Activated CD4-positive, alpha-beta memory T cell treated with anti-CD3 and anti-CD28 coated beads, Interleukin-2, amount 10 ng/mL, durations not matched to agents 7 days and 5 days (primary cell): ENCODE measurements at regions of chr2 and their contacts with region 1.

Region 1: GRCh38 chr2:203871371-203871983 is 3.9 kb downstream of the CTLA4 start:
- DNase-seq: peak; percentile 66
- H3K4me3 Mint-ChIP-seq: peak overlapping the region; percentile 96
- H3K27ac Mint-ChIP-seq: peak overlapping the region; percentile 99
- H3K4me1 Mint-ChIP-seq: peaks cover 78% of the 10 kb centered on the region
- H3K27me3 Mint-ChIP-seq: no peaks in the 10 kb centered on the region

Region 2: DNA sequence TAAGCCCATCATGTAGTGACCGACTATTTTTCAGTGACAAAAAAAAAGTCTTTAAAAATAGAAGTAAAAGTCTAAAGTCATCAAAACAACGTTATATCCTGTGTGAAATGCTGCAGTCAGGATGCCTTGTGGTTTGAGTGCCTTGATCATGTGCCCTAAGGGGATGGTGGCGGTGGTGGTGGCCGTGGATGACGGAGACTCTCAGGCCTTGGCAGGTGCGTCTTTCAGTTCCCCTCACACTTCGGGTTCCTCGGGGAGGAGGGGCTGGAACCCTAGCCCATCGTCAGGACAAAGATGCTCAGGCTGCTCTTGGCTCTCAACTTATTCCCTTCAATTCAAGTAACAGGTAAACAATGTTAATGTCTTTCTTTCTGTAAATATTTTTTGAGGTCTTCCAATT is 165.1 kb before region 1 on chr2 and contains the start of gene CD28:
- CTCF ChIA-PET with region 1: interaction called, 6 read pairs
- POLR2A ChIA-PET with region 1: interaction called, 200 read pairs
- DNase-seq: peak; percentile 95
- H3K4me3 Mint-ChIP-seq: peak within 1 kb of the TSS; percentile 90
- H3K27ac Mint-ChIP-seq: peak within 1 kb of the TSS; percentile 97
- H3K4me1 Mint-ChIP-seq: peaks cover 46% of the 10 kb centered on the region
- H3K27me3 Mint-ChIP-seq: no peaks in the 10 kb centered on the region
- total RNA-seq, gene CD28: 194 to 205 TPM

Region 3: GRCh38 chr2:203730076-203730729 is 141.3 kb before region 1 on chr2:
- CTCF ChIA-PET with region 1: interaction called, 3 read pairs
- POLR2A ChIA-PET with region 1: interaction called, 62 read pairs
- DNase-seq: no peak
- H3K4me3 Mint-ChIP-seq: peak overlapping the region; percentile 28
- H3K27ac Mint-ChIP-seq: peak overlapping the region; percentile 94
- H3K4me1 Mint-ChIP-seq: peaks cover 92% of the 10 kb centered on the region
- H3K27me3 Mint-ChIP-seq: no peaks in the 10 kb centered on the region

Region 4: DNA sequence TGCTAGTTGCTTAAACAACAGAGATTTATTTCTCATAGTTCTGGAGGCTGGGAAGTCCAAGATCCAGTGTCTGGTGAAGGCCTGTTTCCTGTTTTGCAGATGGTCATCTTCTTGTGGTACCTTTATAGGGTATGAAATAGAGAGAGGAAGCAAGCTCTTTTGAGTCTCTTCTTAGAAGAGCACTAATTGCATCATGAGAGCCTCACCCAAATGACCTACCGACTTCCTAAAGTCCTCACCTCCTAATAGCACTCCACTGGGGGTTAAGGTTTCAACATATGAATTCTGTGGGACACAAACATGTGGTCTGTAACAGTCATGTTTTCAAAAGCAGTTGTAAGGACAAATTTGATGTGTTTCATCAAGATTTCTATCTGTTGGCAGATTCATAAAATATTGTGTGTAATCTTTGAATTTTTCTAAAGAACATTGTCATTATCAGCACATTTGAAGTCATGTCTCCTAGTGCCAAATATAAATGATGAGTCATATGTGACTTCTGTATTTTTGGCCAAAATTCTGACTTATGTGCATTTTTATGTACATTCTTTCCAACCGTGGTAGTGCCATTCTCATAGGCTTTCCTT is 119.7 kb before region 1 on chr2:
- CTCF ChIA-PET with region 1: no interaction called
- POLR2A ChIA-PET with region 1: interaction called, 22 read pairs
- DNase-seq: no peak
- H3K4me3 Mint-ChIP-seq: no peak overlapping the region
- H3K27ac Mint-ChIP-seq: peak overlapping the region; percentile 47
- H3K4me1 Mint-ChIP-seq: peaks cover 46% of the 10 kb centered on the region
- H3K27me3 Mint-ChIP-seq: no peaks in the 10 kb centered on the region

Region 5: DNA sequence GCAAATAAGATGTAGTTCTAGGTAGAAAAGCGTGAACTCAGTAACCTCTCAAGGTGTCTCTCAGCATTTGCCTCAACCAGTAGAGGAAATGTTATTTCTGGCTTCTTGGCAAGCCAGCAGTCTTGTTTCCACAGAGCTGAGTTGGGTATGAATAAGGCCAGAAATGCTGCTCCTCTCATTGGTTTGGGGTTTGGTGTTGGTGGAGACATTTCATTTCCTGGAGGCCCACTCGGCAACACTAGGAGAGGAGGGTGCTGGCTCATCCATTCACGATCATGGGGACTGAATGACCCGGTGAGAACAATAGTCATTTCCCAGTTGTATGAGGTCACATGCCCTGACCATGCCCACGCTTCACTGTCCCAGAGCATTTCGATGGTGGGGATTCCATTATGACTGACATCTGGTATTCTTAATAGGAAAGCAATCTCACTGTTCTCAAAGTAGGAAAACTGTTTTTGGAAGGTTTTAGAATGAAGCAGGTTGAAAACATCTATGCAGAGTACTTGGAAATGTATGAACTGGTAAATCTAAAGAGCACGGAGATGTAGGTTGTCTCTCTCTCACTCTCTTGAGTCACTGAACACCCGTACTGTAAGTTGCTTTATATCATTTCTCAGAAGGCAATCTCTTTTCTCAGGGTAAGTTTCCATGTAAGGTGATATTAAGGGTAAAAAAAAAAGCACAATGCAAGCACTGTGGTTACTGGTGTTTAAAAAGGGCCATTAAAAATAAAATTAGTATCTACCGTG is 41.0 kb before region 1 on chr2:
- CTCF ChIA-PET with region 1: interaction called, 3 read pairs
- POLR2A ChIA-PET with region 1: interaction called, 63 read pairs
- DNase-seq: peak; percentile 66
- H3K4me3 Mint-ChIP-seq: peak overlapping the region; percentile 61
- H3K27ac Mint-ChIP-seq: peak overlapping the region; percentile 93
- H3K4me1 Mint-ChIP-seq: peaks cover 29% of the 10 kb centered on the region
- H3K27me3 Mint-ChIP-seq: no peaks in the 10 kb centered on the region

Region 6: GRCh38 chr2:203887677-203888076 is 16.2 kb after region 1 on chr2:
- CTCF ChIA-PET with region 1: interaction called, 17 read pairs
- POLR2A ChIA-PET with region 1: interaction called, 593 read pairs
- DNase-seq: no peak
- H3K4me3 Mint-ChIP-seq: no peak overlapping the region
- H3K27ac Mint-ChIP-seq: peak overlapping the region; percentile 83
- H3K4me1 Mint-ChIP-seq: peaks cover 80% of the 10 kb centered on the region
- H3K27me3 Mint-ChIP-seq: no peaks in the 10 kb centered on the region

Region 7: GRCh38 chr2:203909261-203909967 is 37.9 kb after region 1 on chr2:
- CTCF ChIA-PET with region 1: interaction called, 42 read pairs
- POLR2A ChIA-PET with region 1: interaction called, 593 read pairs
- DNase-seq: no peak
- H3K4me3 Mint-ChIP-seq: peak overlapping the region; percentile 38
- H3K27ac Mint-ChIP-seq: peak overlapping the region; percentile 69
- H3K4me1 Mint-ChIP-seq: peaks cover 33% of the 10 kb centered on the region
- H3K27me3 Mint-ChIP-seq: peaks cover 3% of the 10 kb centered on the region